ENCODE measurements at regions of chr1 and their contacts with region 1.

Region 1: GRCh38 chr1:100459358-100460114 is 78.4 kb upstream of the GPR88 start:
- DNase-seq: peak in 1 of 2 donors; percentile 83
- H3K4me3 ChIP-seq: no peak overlapping the region
- H3K27ac ChIP-seq: no peak overlapping the region
- H3K4me1 ChIP-seq: no peaks in the 10 kb centered on the region
- H3K27me3 ChIP-seq: no peaks in the 10 kb centered on the region
- CTCF ChIP-seq: peak; percentile 60 to 84 (median 73)

Region 2: GRCh38 chr1:99808391-99809115 is 651.0 kb before region 1 on chr1:
- intact Hi-C with region 1: loop called (anchors 5 kb)
- DNase-seq: peak in 1 of 2 donors; percentile 62
- H3K4me3 ChIP-seq: peak overlapping the region in 1 of 2 donors; percentile 52
- H3K27ac ChIP-seq: no peak overlapping the region
- H3K4me1 ChIP-seq: peaks cover 0 to 3% of the 10 kb centered on the region in 2 donors
- H3K27me3 ChIP-seq: no peaks in the 10 kb centered on the region
- CTCF ChIP-seq: peak; percentile 54 to 64 (median 63)

Region 3: GRCh38 chr1:100037927-100038659 is 421.4 kb before region 1 on chr1:
- intact Hi-C with region 1: loop called (anchors 5 kb)
- DNase-seq: peak; percentile 59 to 95
- H3K4me3 ChIP-seq: peak overlapping the region; percentile 93 to 94
- H3K27ac ChIP-seq: peak overlapping the region; percentile 97 to 98
- H3K4me1 ChIP-seq: peaks cover 4 to 9% of the 10 kb centered on the region in 2 donors
- H3K27me3 ChIP-seq: no peaks in the 10 kb centered on the region
- CTCF ChIP-seq: no peak

Region 4: DNA sequence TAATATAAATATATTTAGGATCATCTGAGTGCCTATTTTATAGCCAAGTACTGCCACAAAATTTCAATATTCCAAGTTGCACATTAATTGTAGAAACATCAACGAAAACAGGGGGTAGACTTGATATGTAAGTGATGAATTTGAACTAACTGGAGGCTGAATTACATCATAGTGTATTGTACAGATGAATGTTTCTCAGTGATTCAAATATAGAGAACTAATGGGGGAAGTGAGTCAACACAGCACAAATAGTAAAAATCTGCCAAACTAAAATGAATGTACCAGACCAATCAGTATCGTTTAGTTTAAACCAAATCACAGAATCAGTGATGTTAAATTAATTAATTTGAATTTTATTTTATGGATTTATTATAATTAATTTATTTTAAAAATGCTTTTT is 150.8 kb before region 1 on chr1:
- intact Hi-C with region 1: no loop called
- DNase-seq: no peak
- H3K4me3 ChIP-seq: no peak overlapping the region
- H3K27ac ChIP-seq: no peak overlapping the region
- H3K4me1 ChIP-seq: no peaks in the 10 kb centered on the region
- H3K27me3 ChIP-seq: no peaks in the 10 kb centered on the region
- CTCF ChIP-seq: no peak

Region 5: DNA sequence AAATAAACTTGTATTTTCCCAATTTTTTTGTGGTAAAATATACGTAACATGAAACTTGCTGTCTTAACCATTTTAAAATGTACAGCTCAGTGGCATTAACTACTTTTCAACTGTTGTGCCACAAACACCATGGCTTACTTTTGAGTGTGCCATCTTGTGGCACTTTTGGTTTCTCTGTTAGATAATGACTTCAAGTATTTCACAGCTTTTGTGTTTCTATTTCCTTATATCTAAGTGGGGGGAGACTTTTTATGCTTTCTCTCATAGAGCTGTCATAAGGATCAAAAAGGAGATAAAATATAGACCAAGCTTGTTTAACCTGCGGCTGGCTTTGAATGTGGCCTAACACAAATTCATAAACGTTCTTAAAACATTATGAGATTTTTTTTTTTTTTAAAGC is 62.9 kb before region 1 on chr1:
- intact Hi-C with region 1: no loop called
- DNase-seq: no peak
- H3K4me3 ChIP-seq: no peak overlapping the region
- H3K27ac ChIP-seq: no peak overlapping the region
- H3K4me1 ChIP-seq: no peaks in the 10 kb centered on the region
- H3K27me3 ChIP-seq: no peaks in the 10 kb centered on the region
- CTCF ChIP-seq: no peak

Region 6: GRCh38 chr1:100502052-100502783 is 42.7 kb after region 1 on chr1:
- intact Hi-C with region 1: no loop called
- DNase-seq: no peak
- H3K4me3 ChIP-seq: no peak overlapping the region
- H3K27ac ChIP-seq: no peak overlapping the region
- H3K4me1 ChIP-seq: no peaks in the 10 kb centered on the region
- H3K27me3 ChIP-seq: no peaks in the 10 kb centered on the region
- CTCF ChIP-seq: no peak

Region 7: DNA sequence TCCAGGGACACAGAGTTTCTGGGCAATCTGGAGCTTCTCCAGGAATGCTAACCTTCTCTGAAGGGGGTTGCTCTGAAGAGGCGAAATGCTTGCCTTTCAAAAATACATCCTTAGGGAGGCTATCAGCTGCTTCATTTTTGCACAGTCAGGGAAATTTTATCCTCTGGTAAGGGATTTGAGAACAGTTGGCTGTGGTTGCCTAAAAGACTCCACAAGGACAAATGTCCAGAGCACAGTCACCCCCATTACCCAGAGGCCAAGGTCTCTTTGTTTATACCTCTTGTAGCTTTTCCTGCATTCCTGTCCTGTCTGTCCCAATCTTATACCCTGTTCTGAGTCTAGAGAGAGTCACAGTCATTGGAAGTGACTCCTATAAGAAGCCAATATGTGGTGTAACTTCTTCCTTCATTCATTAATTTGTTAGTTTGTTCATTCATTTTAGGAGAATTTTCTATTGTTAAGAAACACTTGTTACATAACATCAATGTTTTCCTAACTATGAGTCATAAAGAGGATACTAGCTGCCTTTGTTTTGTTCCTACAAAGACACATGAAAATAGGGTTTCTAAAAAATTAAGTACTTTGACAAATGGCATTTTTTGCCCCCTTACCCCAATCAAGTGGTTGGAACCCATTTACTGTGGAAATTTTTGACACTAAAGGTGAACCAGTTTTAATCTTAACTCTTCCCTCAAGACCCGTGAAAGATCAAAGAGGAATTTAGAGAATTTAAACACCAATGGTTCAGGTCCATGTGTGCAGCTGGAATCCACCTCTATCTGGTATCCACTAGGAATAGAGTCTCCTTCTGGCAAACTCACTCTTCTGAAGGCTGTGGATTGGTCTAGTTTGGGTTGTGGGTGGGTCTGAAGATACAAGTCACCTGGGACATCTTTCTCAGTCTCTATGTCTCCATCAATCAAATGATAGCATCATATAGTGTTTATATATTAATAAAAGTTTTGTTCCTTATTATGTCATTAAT is 125.5 kb after region 1 on chr1:
- intact Hi-C with region 1: no loop called
- DNase-seq: no peak
- H3K4me3 ChIP-seq: no peak overlapping the region
- H3K27ac ChIP-seq: no peak overlapping the region
- H3K4me1 ChIP-seq: no peaks in the 10 kb centered on the region
- H3K27me3 ChIP-seq: no peaks in the 10 kb centered on the region
- CTCF ChIP-seq: no peak

Region 8: DNA sequence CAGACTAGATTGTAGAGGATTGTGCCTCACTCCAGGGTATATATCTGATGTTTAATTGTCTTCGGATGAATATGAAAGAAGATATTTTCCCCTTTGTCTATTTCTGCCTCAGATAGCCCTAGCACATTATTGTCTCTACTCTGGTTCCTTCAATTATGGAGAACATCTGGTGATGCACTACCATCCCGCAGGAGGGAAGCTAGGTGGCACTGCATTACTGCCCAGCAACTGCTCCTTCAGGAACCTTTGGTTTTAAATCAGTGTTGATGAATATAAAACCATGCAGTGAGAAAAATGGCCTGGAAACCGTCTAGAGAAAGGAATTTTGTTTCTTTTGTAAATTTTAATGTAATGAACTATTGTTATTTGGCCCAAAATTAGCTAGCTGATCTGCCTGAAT is 146.9 kb after region 1 on chr1:
- intact Hi-C with region 1: loop called (anchors 5 kb)
- DNase-seq: peak in 1 of 2 donors; percentile 76
- H3K4me3 ChIP-seq: no peak overlapping the region
- H3K27ac ChIP-seq: no peak overlapping the region
- H3K4me1 ChIP-seq: peaks cover 0 to 14% of the 10 kb centered on the region in 2 donors
- H3K27me3 ChIP-seq: no peaks in the 10 kb centered on the region
- CTCF ChIP-seq: peak; percentile 61 to 87 (median 71)

Region 9: DNA sequence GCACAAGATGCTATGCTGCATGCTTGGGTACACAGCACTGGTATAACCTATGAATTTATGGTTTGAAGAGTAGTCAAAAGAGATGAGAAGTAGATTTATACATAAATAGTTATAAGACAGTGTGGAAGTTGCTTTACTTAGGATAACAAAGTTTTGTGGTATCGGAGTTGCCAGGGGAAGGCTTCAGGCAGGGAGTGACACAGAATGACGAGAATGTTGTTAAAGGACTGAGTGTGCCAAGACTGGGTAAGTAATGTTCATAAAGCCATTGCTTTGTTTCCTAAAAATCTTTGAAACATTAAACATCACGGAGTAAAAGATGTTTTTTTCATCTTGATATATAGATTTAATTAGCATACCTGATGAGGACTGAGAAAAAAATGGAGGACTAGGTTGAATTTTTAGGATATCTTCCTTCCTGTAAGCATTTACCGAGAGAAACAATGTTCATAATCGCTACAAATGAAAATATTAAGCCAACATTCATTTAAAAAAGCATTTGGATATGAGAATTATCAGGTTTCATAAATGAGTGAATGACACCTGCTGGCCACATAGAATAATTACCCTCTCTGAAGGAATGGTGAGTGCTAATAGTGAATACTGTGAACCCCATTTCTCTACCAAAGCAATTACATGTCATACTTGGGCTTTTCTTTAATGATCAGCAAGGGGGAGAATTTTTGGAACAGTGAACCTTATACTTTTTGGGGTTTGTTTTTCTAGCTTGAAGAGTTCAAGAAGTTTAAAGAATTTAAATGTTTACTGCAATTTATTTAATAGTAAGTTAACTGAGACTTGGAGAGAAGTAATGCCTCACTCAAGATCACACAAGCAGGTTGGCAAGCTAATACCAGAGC is 406.7 kb after region 1 on chr1:
- intact Hi-C with region 1: loop called (anchors 2 kb)
- DNase-seq: no peak
- H3K4me3 ChIP-seq: peak overlapping the region in 1 of 2 donors; percentile 41
- H3K27ac ChIP-seq: no peak overlapping the region
- H3K4me1 ChIP-seq: no peaks in the 10 kb centered on the region
- H3K27me3 ChIP-seq: no peaks in the 10 kb centered on the region
- CTCF ChIP-seq: peak; percentile 50 to 68 (median 63)

Measured in ascending aorta (tissue), 2 donors.